Activated T-helper 1 cell treated with anti-CD3 and anti-CD28 coated beads, Interleukin-12 subunit alpha, Interleukin-12 subunit beta, Interleukin-2, Interleukin-4 antibody, amounts not matched to agents 30 ng/mL and 10 ng/mL and 1 ng/mL, durations not matched to agents 14 hours and 24 hours and 36 hours (primary cell): ENCODE measurements at regions of chr1 and their contacts with region 1.

Region 1: GRCh38 chr1:47262787-47263413 is 30.9 kb upstream of the TAL1 start:
- DNase-seq: peak; percentile 22
- H3K4me3 Mint-ChIP-seq: no peak overlapping the region
- H3K27ac Mint-ChIP-seq: no peak overlapping the region
- H3K4me1 Mint-ChIP-seq: no peaks in the 10 kb centered on the region
- H3K27me3 Mint-ChIP-seq: no peaks in the 10 kb centered on the region

Region 2: GRCh38 chr1:47179017-47179987 is 83.6 kb before region 1 on chr1:
- intact Hi-C with region 1: loop called (anchors 1 kb)
- DNase-seq: peak; percentile 74
- H3K4me3 Mint-ChIP-seq: peak overlapping the region; percentile 87
- H3K27ac Mint-ChIP-seq: peak overlapping the region; percentile 92
- H3K4me1 Mint-ChIP-seq: peaks cover 13% of the 10 kb centered on the region
- H3K27me3 Mint-ChIP-seq: peaks cover 22% of the 10 kb centered on the region

Region 3: DNA sequence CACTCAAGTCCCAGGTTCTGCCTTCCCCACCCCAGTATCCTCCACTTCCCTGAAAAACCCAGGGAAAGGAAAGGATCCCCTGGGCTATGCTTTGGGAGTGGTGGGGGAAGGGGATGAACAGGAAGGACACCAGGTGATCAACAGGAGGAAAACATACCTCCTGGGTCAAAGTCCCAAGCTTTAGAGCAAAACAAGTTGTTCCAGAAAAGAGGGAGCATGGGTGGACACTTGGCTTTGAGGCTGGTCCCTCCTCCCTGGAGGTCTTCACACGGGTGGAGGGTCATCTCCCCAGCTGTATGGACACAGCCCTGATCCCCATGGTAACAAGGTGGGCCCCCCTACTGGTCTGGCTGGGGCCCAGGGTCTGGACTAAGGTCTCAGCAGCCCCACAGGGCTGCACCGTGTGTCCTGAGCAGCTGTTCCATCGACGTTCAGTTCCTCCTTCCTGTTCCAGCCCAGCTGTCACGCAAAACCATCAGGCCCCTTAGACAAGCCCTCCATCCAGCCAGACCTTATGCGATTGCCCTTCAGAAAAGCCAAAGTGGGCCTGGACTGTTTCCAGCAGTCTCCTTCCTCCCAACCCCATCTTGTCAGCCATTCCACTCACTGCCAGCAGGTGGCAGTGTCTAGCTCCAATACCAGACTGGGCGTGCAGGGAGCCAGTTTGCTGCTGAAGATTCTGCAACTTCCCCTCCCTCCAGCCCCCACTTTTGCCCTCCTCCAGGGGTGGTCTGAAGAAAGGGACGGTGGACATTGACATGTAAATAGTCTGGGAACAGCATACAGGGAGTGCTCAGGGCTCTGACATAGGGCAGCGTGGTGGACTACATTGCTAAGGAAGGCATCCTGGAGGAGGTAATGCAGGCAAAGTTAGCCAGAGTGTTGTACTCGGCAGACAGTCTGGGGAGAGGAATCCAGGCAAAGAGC is 70.2 kb before region 1 on chr1:
- intact Hi-C with region 1: loop called (anchors 1 kb)
- DNase-seq: peak; percentile 54
- H3K4me3 Mint-ChIP-seq: no peak overlapping the region
- H3K27ac Mint-ChIP-seq: no peak overlapping the region
- H3K4me1 Mint-ChIP-seq: no peaks in the 10 kb centered on the region
- H3K27me3 Mint-ChIP-seq: peaks cover 3% of the 10 kb centered on the region

Region 4: GRCh38 chr1:47280157-47280556 is 17.3 kb after region 1 on chr1:
- intact Hi-C with region 1: loop called (anchors 2 kb)
- DNase-seq: no peak
- H3K4me3 Mint-ChIP-seq: no peak overlapping the region
- H3K27ac Mint-ChIP-seq: peak overlapping the region; percentile 19
- H3K4me1 Mint-ChIP-seq: peaks cover 19% of the 10 kb centered on the region
- H3K27me3 Mint-ChIP-seq: no peaks in the 10 kb centered on the region